ENCODE measurements at regions of chr13 and their contacts with region 1.

Region 1: DNA sequence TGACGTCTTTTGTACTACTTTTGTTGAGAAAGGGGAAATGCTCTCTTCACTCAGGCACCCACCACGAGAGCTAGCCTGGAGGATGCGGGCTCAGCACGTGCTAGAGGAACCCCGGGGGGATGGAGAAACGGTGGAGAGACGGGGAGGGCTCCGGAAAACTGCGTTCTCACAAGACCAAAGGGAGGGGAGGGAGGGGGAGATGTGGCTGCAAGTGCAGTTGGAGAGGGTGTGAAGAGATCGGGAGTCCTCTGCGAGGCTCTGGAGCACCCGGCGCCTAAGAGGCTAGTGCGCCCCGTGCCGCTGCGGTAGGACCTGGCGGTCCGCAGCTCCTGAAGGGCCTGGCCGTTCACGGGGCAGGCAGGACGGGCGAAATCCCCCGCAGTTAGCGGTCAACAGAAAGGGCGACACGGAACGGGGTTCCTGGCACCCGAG is 43.4 kb upstream of the XPO4 start:
- DNase-seq: peak; percentile 22
- H3K4me3 ChIP-seq: peak overlapping the region in 1 of 4 donors; percentile 18
- H3K27ac ChIP-seq: no peak overlapping the region
- H3K4me1 ChIP-seq: peaks cover 0 to 16% (median 10%) of the 10 kb centered on the region in 4 donors
- H3K27me3 ChIP-seq: peaks cover 8% of the 10 kb centered on the region
- CTCF ChIP-seq: no peak
- EP300 ChIP-seq: no peak
- POLR2A ChIP-seq: no peak

Region 2: DNA sequence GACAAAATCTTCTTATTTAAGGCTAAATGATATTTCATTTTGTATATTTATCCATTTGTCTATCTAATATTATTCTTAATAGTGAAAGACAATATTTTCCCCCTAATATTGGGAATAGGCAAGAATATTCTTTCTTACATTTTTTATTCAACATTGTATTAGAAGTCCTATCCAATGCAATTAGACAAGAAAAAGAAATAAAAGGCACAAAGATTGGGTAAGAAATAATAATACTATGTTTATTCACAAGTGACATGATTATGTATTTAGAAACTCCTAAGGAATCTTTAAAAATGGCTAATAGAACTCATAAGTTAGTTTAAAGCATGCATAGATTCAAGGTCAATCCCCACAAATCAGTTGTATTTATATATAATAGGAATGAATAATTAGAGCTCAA is 409.0 kb before region 1 on chr13:
- in situ Hi-C with region 1: no loop called
- intact Hi-C with region 1: no loop called
- DNase-seq: no peak
- H3K4me3 ChIP-seq: no peak overlapping the region
- H3K27ac ChIP-seq: no peak overlapping the region
- H3K4me1 ChIP-seq: no peaks in the 10 kb centered on the region
- H3K27me3 ChIP-seq: no peaks in the 10 kb centered on the region
- CTCF ChIP-seq: no peak
- EP300 ChIP-seq: no peak
- POLR2A ChIP-seq: no peak

Region 3: GRCh38 chr13:21060987-21061763 is 115.2 kb after region 1 on chr13 and contains the start of gene LATS2:
- in situ Hi-C with region 1: no loop called
- intact Hi-C with region 1: loop called (anchors 10 kb)
- DNase-seq: peak; percentile 96
- H3K4me3 ChIP-seq: peak within 1 kb of the TSS; percentile 73 to 93 (median 86)
- H3K27ac ChIP-seq: peak within 1 kb of the TSS; percentile 97 to 98 (median 98)
- H3K4me1 ChIP-seq: peaks cover 3 to 28% (median 12%) of the 10 kb centered on the region in 4 donors
- H3K27me3 ChIP-seq: peaks cover 11% of the 10 kb centered on the region
- CTCF ChIP-seq: peak in 1 of 5 experiments; percentile 22
- EP300 ChIP-seq: no peak
- POLR2A ChIP-seq: peak; percentile 83
- total RNA-seq, gene LATS2: 8.9 to 15.7 (median 12.5) TPM

Region 4: GRCh38 chr13:21137696-21138095 is 191.7 kb after region 1 on chr13:
- in situ Hi-C with region 1: loop called in 1 of 4 experiments (anchors 10 kb)
- intact Hi-C with region 1: loop called (anchors 10 kb)
- DNase-seq: no peak
- H3K4me3 ChIP-seq: no peak overlapping the region
- H3K27ac ChIP-seq: no peak overlapping the region
- H3K4me1 ChIP-seq: peaks cover 11 to 42% (median 23%) of the 10 kb centered on the region in 4 donors
- H3K27me3 ChIP-seq: no peaks in the 10 kb centered on the region
- CTCF ChIP-seq: no peak
- EP300 ChIP-seq: no peak
- POLR2A ChIP-seq: no peak